Kidney (tissue), 22 donors: ENCODE measurements at regions of chr1 and their contacts with region 1.

Region 1: GRCh38 chr1:31663622-31664452 is 19.2 kb upstream of the PEF1 start:
- DNase-seq: peak in 4 of 5 donors; percentile 64 to 84 (median 76)
- H3K4me3 ChIP-seq: no peak overlapping the region
- H3K27ac ChIP-seq: no peak overlapping the region
- H3K4me1 ChIP-seq: no peaks in the 10 kb centered on the region
- H3K27me3 ChIP-seq: no peaks in the 10 kb centered on the region
- CTCF ChIP-seq: peak; percentile 96

Region 2: DNA sequence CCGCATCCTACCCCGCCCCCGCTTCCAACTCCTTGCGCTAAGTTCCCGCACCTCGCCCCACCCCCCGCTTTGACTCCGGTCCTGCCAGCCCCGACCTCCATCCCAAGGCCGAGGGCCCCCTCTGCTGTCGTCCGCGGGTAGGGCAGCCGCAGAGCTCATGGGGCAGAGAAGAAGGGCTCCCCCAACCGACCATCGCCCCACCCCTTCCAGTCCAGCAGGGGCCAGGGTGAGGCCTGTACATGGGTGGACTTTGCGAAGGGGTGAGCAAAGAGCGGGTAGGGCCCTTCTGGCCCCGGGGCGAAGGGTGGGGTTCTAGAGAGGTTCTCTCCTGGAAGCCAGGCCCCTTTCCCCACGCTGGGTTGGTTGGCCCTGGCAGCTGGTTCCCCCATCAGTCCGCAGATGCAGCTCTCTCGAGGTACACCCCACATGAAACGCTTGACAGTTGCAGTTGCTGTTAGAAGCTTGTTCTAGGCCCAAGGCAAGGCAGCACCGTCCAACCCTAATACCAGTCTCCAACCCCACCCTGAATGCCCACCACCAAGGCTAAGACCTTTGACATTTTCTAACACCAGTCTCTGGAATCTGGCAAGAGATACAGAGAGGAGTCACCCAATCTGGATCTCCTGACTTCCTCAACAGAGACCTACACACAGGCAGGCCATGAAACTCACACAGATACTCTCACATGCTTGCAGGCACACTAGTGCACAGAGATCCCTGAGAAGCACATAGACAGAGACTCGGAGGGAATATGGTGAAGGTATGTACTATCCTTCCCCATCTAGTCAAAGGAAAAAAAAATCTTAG is 125.6 kb after region 1 on chr1:
- intact Hi-C with region 1: loop called (anchors 5 kb)
- DNase-seq: peak; percentile 94 to 98 (median 95)
- H3K4me3 ChIP-seq: peak overlapping the region in 1 of 3 donors; percentile 71
- H3K27ac ChIP-seq: no peak overlapping the region
- H3K4me1 ChIP-seq: peaks cover 0 to 3% (median 0%) of the 10 kb centered on the region in 3 donors
- H3K27me3 ChIP-seq: no peaks in the 10 kb centered on the region
- CTCF ChIP-seq: peak; percentile 94

Region 3: GRCh38 chr1:32063261-32063681 is 399.4 kb after region 1 on chr1:
- intact Hi-C with region 1: no loop called
- DNase-seq: peak in 3 of 5 donors; percentile 64 to 91 (median 88)
- H3K4me3 ChIP-seq: no peak overlapping the region
- H3K27ac ChIP-seq: peak overlapping the region in 1 of 2 donors; percentile 60
- H3K4me1 ChIP-seq: peaks cover 8 to 13% (median 8%) of the 10 kb centered on the region in 3 donors
- H3K27me3 ChIP-seq: no peaks in the 10 kb centered on the region
- CTCF ChIP-seq: peak; percentile 52